Activated CD8-positive, alpha-beta memory T cell treated with anti-CD3 and anti-CD28 coated beads, Interleukin-2, amount 10 ng/mL, durations not matched to agents 7 days and 5 days (primary cell): ENCODE measurements at regions of chr11 and their contacts with region 1.

Region 1: GRCh38 chr11:83292709-83293456 is 6.7 kb upstream of the CCDC90B start:
- DNase-seq: no peak
- ATAC-seq: peak; percentile 91
- H3K4me3 Mint-ChIP-seq: peak overlapping the region; percentile 47
- H3K27ac Mint-ChIP-seq: no peak overlapping the region
- H3K4me1 Mint-ChIP-seq: peaks cover 6% of the 10 kb centered on the region
- H3K27me3 Mint-ChIP-seq: peaks cover 11% of the 10 kb centered on the region

Region 2: DNA sequence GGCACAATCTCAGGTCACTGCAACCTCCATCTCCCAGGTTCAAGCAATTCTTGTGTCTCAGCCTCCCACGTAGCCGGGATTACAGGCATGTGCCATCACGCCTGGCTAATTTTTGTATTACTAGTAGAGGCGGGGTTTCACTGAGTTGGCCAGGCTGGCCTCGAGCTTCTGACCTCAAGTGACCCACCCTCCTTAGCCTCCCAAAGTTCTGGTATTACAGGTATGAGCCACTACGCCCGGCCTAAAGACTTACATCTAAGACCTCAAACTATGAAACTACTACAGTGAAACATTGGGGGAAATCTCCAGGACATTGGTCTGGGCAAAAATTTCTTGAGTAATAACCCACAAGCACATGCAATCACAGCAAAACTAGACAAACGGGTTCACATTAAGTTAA is 545.4 kb before region 1 on chr11:
- CTCF ChIA-PET with region 1: no interaction called
- DNase-seq: no peak
- ATAC-seq: no peak
- H3K4me3 Mint-ChIP-seq: no peak overlapping the region
- H3K27ac Mint-ChIP-seq: no peak overlapping the region
- H3K4me1 Mint-ChIP-seq: peaks cover 11% of the 10 kb centered on the region
- H3K27me3 Mint-ChIP-seq: peaks cover 36% of the 10 kb centered on the region

Region 3: DNA sequence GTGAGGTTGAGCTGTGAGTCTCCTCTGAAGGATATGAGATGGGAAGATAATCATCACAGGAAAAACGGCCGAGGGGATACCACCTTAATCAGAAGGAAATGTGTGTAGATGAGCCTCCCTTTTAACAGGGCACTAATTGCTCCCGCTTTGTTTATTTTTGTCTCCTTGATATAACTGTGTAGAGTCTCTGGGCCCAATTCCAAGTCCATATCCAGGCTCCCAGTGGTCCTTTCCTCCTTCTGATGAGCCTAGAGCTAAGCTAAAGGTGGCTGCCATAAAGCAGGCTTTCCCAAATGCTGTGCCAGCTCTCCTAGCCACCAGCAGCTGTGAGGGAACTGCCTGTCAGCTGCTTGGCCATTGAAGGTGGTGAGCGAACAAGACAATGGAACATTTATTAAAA is 10.4 kb after region 1 on chr11:
- CTCF ChIA-PET with region 1: interaction called, 13 read pairs
- DNase-seq: no peak
- ATAC-seq: no peak
- H3K4me3 Mint-ChIP-seq: no peak overlapping the region
- H3K27ac Mint-ChIP-seq: no peak overlapping the region
- H3K4me1 Mint-ChIP-seq: no peaks in the 10 kb centered on the region
- H3K27me3 Mint-ChIP-seq: no peaks in the 10 kb centered on the region

Region 4: GRCh38 chr11:83779876-83780275 is 487.0 kb after region 1 on chr11:
- CTCF ChIA-PET with region 1: no interaction called
- DNase-seq: no peak
- ATAC-seq: no peak
- H3K4me3 Mint-ChIP-seq: no peak overlapping the region
- H3K27ac Mint-ChIP-seq: no peak overlapping the region
- H3K4me1 Mint-ChIP-seq: no peaks in the 10 kb centered on the region
- H3K27me3 Mint-ChIP-seq: peaks cover 7% of the 10 kb centered on the region

Region 5: DNA sequence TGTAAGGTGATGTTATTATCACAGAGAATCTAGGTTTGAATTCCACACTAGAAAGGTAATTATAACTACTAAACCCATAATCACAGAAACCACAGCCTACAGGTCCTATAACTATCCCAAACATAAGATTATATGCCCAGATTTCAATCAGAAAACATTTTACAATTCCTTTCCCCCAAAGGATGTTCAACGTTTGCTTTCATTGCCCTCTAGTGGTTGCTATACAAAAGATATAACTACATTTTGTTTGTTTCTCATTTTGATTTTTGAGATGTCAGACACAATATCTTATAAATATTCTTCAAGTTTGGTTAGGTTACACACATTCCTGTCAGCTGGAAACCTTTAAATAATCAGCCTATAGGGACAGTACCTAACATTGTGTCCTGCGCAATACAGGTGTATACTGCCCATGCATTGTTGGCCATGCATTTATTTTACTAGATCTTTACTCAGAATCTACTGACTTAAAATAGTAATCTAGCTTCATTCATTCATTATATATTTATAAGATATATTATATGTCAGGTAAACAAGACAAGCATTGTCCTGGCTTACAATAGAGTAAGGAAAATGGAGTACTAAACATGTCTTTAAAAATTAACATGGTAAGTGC is 523.8 kb after region 1 on chr11:
- CTCF ChIA-PET with region 1: interaction called, 21 read pairs
- DNase-seq: no peak
- ATAC-seq: no peak
- H3K4me3 Mint-ChIP-seq: no peak overlapping the region
- H3K27ac Mint-ChIP-seq: no peak overlapping the region
- H3K4me1 Mint-ChIP-seq: no peaks in the 10 kb centered on the region
- H3K27me3 Mint-ChIP-seq: peaks cover 28% of the 10 kb centered on the region